ENCODE measurements at regions of chr3 and their contacts with region 1.

Region 1: DNA sequence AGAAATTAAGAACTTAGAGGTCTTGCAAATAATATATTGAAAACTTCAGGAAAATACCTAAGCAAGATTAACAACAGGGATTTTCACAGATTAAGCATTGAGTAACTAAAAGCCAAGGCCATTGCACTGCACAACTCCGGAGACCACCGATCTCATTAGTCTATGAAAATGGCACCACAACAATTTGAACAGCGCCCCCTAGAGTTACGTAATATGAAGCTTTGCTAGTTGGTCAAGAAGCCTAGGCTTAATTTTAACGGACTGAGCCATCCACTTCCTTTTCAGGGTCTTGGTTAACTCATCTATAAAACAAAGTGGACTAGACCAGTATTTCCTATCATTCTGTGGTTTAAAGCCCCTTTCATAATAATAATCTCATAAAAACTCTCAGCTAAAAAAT is 24.8 kb downstream of the TMEM212 start:
- DNase-seq: no peak
- H3K4me3 ChIP-seq: no peak overlapping the region
- H3K27ac ChIP-seq: no peak overlapping the region
- H3K4me1 ChIP-seq: no peaks in the 10 kb centered on the region
- H3K27me3 ChIP-seq: no peaks in the 10 kb centered on the region
- CTCF ChIP-seq: peak in 1 of 5 experiments; percentile 15
- EP300 ChIP-seq: no peak
- POLR2A ChIP-seq: no peak

Region 2: GRCh38 chr3:171654809-171655208 is 213.2 kb before region 1 on chr3:
- in situ Hi-C with region 1: no loop called
- intact Hi-C with region 1: no loop called
- DNase-seq: peak; percentile 14
- H3K4me3 ChIP-seq: no peak overlapping the region
- H3K27ac ChIP-seq: peak overlapping the region in 3 of 4 donors; percentile 25 to 29 (median 28)
- H3K4me1 ChIP-seq: peaks cover 0 to 5% (median 0%) of the 10 kb centered on the region in 4 donors
- H3K27me3 ChIP-seq: no peaks in the 10 kb centered on the region
- CTCF ChIP-seq: no peak
- EP300 ChIP-seq: no peak
- POLR2A ChIP-seq: no peak

Region 3: DNA sequence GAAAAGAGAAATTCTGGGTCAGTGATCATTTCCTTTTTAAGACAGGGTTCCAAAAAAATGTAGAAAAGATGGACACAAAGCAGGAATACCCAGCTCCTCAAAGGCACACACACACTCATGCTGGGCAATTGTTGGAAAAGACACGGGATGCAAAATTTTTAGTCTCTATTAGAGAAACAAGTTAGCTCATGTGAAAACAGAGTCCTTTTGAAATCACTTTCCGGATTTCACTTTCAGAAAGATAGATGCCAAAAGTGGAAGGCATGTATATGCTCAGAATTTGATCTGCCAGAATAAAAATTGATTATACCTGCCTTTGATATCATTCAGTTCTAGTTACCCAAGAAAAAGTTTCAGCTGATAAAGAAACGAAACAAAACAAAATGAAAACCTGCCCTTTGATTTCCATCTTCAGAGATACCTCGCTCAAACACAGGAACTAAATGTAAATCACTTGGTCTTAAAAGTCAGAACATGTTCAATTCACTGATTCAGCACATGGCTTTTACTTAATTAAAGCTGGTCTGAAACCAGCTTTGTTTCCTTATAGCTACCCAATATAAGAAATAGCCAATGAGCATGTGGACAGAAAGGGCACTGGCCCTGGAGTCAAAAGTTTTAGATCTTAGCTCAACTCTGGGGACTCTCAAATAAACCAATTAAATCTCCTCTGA is 110.5 kb before region 1 on chr3:
- in situ Hi-C with region 1: no loop called
- intact Hi-C with region 1: no loop called
- DNase-seq: no peak
- H3K4me3 ChIP-seq: no peak overlapping the region
- H3K27ac ChIP-seq: no peak overlapping the region
- H3K4me1 ChIP-seq: peaks cover 0 to 14% (median 8%) of the 10 kb centered on the region in 4 donors
- H3K27me3 ChIP-seq: no peaks in the 10 kb centered on the region
- CTCF ChIP-seq: no peak
- EP300 ChIP-seq: no peak
- POLR2A ChIP-seq: no peak

Region 4: GRCh38 chr3:172635588-172635987 is 767.6 kb after region 1 on chr3:
- in situ Hi-C with region 1: no loop called
- intact Hi-C with region 1: loop called (anchors 5 kb)
- DNase-seq: no peak
- H3K4me3 ChIP-seq: no peak overlapping the region
- H3K27ac ChIP-seq: no peak overlapping the region
- H3K4me1 ChIP-seq: peaks cover 0 to 8% (median 0%) of the 10 kb centered on the region in 4 donors
- H3K27me3 ChIP-seq: no peaks in the 10 kb centered on the region
- CTCF ChIP-seq: no peak
- EP300 ChIP-seq: no peak
- POLR2A ChIP-seq: no peak